Right ventricle myocardium inferior (tissue), 1 donor: ENCODE measurements at regions of chr17 and their contacts with region 1.

Region 1: DNA sequence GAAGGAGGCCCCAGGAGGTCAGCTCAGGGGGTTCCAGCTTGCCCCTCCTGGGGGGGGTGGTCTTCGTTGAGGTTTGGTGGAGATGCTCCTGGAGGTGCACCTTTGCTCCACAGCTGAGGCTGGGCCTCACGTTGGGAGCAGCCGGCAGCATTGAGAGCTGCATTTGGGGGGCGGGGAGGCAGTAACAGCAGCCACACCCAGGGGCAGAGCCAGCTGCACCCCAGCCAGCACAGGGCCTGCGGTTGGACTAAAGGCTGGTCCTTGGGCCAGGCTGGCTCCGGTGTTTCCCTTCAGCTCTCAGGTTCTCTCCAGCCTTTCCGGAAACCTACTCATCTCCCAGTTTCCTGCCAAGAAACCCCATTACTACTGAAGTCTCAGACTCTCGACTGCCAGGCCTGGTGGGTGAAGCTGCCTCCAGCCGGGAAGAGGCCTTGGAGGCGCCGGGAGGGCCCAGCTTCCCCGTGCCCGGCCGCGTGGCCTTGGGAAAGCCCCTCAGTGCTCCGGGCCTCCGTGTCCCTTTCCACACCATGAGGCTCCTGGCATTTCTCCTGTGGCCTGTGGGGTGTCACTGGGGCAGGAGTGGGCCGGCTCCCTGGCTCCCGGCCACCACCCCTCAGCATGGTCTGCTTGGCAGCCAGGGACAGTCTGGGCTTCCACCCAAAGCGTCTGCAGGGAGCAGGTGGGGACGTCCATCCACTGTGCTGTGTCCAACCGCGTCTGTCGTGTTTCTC is 14.0 kb upstream of the BAIAP2 start:
- DNase-seq: peak; percentile 75
- ATAC-seq: peak; percentile 86

Region 2: DNA sequence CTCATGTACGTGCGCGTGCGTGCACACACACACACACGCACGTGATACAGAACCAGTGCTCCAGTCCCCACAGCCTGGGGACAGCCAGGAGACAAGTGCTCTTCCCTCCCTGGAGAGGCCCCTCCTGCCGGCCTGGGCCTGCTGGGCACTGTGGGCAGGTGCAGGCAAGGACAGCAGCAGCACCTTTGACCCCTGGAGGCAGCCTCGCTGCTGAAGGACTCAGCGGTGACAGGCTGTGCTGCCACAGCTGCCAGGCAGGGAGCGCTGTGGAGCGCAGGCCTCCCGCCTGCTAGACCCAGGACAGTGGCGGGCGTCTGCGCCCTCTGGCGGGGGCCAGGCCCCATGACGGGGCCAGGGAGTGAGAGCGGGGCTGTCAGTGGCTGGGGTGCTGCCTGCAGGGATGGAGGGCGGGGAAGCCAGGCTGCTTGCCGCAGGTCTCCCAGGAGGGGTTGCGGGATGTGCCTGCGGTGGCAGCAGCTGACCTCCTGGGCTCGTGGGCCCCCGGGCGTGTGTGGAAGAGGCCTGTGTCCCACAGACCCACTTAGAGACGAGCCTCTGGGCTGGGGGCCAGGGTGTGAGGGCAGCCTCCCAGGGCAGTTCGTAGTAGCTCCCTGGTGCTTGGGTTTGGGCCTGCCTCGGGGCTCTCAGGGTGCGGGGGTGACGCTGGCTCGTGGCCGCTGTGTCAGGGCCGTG is 80.8 kb after region 1 on chr17:
- intact Hi-C with region 1: loop called (anchors 1 kb)
- DNase-seq: peak; percentile 94
- ATAC-seq: peak; percentile 85

Region 3: DNA sequence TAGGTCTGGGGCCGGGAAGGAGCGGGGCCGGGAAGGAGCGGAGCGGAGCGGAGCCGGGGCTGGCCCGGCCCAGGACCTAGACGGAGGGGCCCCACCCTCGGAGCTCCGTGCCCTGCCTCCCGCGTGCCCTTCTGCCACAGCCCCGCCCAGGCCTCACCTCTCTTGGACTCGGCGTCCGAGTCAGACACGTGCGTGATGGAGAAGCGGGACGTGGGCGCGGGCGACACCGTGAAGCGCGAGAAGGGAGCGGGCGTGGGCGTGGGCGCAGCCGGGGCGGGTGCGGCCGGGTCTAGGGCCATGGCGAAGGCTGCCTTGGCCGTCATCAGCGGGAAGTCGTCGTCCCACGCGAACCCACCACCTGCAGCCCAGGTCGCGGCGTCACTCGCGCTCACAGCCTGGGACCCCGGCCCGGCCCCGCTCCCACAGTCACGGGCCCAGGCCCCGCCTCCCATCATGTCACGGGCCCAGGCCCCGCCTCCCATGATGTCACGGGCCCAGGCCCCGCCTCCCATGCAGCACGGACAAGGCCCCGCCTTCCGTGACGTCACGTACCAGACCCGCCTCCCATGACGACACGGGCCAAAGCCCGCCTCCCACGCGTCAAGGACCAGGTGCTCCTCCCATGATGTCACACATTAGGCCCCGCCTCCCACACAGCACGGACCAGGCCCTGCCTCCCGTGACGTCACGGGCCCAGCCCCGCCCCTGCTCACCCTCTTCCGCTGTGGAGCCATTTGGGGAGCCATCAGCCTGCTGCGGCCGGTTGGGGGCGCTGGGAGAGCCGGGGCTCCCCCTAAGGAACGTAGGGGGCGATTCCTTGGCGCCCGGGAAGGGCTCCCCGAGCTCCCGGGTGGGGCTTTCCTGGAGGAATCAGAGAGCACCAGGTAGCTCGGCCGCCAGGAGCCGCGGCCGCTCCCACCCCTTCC is 98.6 kb after region 1 on chr17:
- intact Hi-C with region 1: no loop called
- DNase-seq: peak; percentile 86
- ATAC-seq: no peak